ENCODE measurements at regions of chr10 and their contacts with region 1.

Region 1: GRCh38 chr10:99612167-99612831 is 7.9 kb downstream of the SLC25A28 start:
- DNase-seq: peak; percentile 40
- H3K4me3 ChIP-seq: no peak overlapping the region
- H3K27ac ChIP-seq: no peak overlapping the region
- H3K4me1 ChIP-seq: no peaks in the 10 kb centered on the region
- H3K27me3 ChIP-seq: no peaks in the 10 kb centered on the region
- CTCF ChIP-seq: peak; percentile 58 to 82 (median 80)
- POLR2A ChIP-seq: no peak

Region 2: DNA sequence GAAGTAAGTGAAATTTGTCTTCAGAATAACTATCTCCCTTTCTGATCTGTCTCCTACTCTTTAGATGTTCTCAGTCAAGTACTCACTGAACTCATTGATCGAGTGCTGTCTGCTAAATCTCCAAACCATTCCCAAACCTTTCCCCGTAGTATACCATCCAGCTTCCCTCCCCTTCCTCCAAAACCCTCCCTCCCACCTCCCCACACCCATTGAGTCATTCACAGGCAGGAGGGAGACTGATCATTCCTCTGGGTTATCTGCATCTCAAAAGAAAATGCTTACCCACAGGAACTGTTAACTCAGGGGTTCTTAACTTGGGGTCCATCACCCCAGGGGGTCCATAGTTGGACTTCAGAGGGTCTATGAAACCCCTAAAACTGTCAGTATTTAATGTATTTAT is 219.3 kb before region 1 on chr10:
- intact Hi-C with region 1: loop called (anchors 2 kb)
- DNase-seq: no peak
- H3K4me3 ChIP-seq: no peak overlapping the region
- H3K27ac ChIP-seq: no peak overlapping the region
- H3K4me1 ChIP-seq: no peaks in the 10 kb centered on the region
- H3K27me3 ChIP-seq: no peaks in the 10 kb centered on the region
- CTCF ChIP-seq: no peak
- POLR2A ChIP-seq: no peak

Region 3: DNA sequence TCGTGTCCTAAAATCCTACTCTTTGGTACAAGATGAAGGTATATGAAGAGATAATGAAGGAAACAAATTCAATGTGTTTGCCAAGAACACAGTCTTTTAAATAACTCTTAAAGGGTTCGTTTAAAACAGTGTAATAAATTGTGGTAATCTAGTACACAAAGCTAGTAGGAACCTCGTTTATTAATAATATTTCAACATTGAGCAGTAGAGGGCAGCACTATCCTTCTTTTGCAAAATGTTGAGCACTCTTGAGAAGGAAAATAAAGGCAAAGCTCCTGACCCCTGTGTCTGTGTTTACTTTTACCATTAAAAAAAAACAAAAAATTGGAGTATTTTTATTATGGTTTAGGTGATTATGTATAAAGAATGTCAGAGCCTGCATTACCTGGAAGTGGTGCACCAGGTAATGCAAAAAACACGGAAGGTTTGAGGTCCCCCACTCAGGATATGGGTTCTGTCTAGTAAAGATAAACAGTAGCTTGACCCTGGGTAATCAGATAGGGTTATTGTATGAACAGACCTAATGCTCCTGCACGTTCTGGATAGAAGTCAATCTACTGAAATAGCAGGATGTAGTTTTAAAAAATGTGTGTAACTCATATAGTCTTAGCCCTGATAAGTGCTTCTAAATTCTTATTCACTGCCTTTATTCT is 176.2 kb before region 1 on chr10:
- intact Hi-C with region 1: loop called (anchors 2 kb)
- DNase-seq: peak; percentile 16
- H3K4me3 ChIP-seq: no peak overlapping the region
- H3K27ac ChIP-seq: no peak overlapping the region
- H3K4me1 ChIP-seq: peaks cover 7% of the 10 kb centered on the region
- H3K27me3 ChIP-seq: no peaks in the 10 kb centered on the region
- CTCF ChIP-seq: peak in 3 of 4 experiments; percentile 36 to 67 (median 62)
- POLR2A ChIP-seq: no peak

Region 4: GRCh38 chr10:99742701-99743100 is 130.4 kb after region 1 on chr10:
- intact Hi-C with region 1: no loop called
- DNase-seq: no peak
- H3K4me3 ChIP-seq: no peak overlapping the region
- H3K27ac ChIP-seq: no peak overlapping the region
- H3K4me1 ChIP-seq: no peaks in the 10 kb centered on the region
- H3K27me3 ChIP-seq: no peaks in the 10 kb centered on the region
- CTCF ChIP-seq: no peak
- POLR2A ChIP-seq: no peak

Measured in prostate gland (tissue), 2 donors.